Psoas muscle (tissue), 8 donors: ENCODE measurements at regions of chr5 and their contacts with region 1.

Region 1: GRCh38 chr5:142922223-142922952 is 152.2 kb downstream of the ARHGAP26 start:
- DNase-seq: no peak
- ATAC-seq: peak; percentile 65 to 80 (median 71)
- H3K4me3 ChIP-seq: no peak overlapping the region
- H3K27ac ChIP-seq: no peak overlapping the region
- H3K4me1 ChIP-seq: peaks cover 23% of the 10 kb centered on the region
- H3K27me3 ChIP-seq: no peaks in the 10 kb centered on the region
- CTCF ChIP-seq: peak; percentile 65

Region 2: DNA sequence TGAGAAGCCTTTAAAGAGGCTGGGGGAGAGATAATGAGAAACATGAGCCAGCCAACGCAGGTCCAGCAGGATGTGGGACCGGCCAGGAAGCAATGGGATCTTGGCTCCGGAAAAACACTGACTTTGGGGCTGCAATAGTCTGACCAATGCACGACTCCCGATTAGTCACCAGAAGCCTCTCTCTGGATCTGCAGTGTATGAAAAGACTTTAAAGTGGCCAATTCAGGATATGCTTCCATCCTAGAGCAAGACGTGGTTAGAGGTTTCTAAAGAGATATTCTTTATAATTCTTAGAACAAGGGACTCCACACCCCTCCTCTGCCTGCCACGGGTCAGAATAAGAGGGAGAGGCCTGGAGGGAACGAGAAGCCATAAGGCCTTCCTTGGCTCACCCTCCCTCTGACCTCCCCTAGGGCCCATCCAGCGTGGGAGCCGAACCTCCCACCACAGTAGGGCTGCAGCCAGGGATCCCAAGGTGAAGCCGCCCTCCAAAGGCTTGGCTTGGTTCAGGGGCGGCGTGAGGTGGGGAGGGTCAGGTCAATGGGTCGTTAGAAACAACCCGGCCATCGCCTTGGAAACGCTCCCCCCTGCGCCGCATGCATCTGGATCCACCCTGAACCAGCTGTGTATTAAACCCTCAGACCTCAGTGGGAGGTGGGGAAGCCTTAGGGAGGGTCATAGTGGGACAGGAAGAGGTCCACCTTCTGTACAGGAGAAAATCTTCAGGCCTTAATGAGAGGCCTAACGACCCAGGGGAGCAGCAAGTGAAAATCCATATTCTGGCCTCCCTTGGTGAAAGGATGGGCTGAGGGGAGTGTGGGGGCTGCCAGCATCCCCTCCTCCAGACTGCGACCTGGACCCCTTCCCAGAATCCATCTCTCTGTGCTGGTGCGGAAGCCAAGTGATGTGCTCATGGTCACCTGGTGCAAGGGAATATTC is 247.6 kb before region 1 on chr5:
- intact Hi-C with region 1: no loop called
- DNase-seq: peak in 1 of 2 donors; percentile 64
- ATAC-seq: peak in 3 of 4 donors; percentile 53 to 64 (median 61)
- H3K4me3 ChIP-seq: no peak overlapping the region
- H3K27ac ChIP-seq: peak overlapping the region; percentile 53
- H3K4me1 ChIP-seq: no peaks in the 10 kb centered on the region
- H3K27me3 ChIP-seq: no peaks in the 10 kb centered on the region
- CTCF ChIP-seq: no peak

Region 3: DNA sequence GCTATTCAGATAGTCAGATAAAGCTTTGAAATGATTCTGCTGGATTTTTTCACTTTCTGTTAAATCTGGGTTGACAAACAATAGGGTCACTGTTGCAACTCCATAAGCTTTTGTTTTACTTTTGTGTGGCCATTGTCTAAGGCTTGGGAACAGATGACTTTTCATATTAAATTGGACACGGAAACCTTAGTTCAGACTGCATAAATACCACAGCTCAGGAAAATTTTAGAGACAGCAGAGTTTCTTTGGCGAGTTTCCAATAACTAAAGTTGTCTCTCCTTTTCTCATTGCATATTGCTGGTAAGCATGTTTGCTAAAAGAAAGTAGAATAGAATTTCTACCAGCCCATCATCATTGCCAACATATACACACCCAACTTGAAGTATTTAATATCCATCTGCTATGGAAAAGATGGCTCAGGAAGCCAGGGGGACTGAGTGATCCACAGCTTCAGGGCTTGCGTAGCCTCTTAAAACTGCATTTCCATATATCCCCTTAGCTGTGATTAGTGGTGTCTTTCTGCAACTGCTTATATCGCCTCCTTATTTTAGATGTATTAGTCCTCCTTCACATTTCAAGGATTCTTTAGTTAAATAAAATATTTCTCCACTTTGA is 16.0 kb after region 1 on chr5:
- intact Hi-C with region 1: no loop called
- DNase-seq: no peak
- ATAC-seq: no peak
- H3K4me3 ChIP-seq: no peak overlapping the region
- H3K27ac ChIP-seq: peak overlapping the region; percentile 59
- H3K4me1 ChIP-seq: peaks cover 49% of the 10 kb centered on the region
- H3K27me3 ChIP-seq: no peaks in the 10 kb centered on the region
- CTCF ChIP-seq: no peak

Region 4: GRCh38 chr5:142959683-142960657 is 37.6 kb after region 1 on chr5:
- intact Hi-C with region 1: loop called in 1 of 2 experiments (anchors 5 kb)
- DNase-seq: no peak
- ATAC-seq: peak; percentile 61 to 73 (median 66)
- H3K4me3 ChIP-seq: no peak overlapping the region
- H3K27ac ChIP-seq: no peak overlapping the region
- H3K4me1 ChIP-seq: peaks cover 41% of the 10 kb centered on the region
- H3K27me3 ChIP-seq: no peaks in the 10 kb centered on the region
- CTCF ChIP-seq: no peak